ENCODE measurements at regions of chr11 and their contacts with region 1.

Region 1: DNA sequence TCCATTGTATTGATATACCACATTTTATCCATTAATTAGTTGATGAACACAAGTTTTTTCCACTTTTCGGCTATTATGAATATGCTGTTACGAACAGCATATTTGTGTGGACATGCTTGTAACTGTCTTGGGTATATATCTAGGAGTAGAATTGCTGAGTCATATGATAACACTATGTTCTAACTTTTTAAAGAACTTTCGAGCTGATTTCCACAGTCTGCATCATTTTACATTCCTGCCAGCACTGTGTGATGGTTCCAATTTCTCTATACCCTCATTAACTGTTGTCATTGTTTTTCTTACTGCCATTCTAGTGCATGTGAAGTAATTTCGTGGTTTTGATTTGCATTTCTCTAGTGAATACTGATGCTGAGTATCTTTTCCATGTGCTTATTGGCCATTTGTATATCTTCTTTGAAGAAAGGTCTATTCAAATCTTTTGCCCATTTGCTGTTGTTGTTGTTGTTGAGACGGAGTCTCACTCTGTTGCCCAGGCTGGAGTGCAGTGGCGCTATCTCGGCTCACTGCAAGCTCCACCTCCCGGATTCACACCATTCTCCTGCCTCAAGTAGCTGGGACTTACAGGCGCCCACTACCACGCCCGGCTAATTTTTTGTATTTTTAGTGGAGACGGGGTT is 7.4 kb upstream of the RCE1 start:
- DNase-seq: no peak
- H3K4me3 ChIP-seq: no peak overlapping the region
- H3K4me3 Mint-ChIP-seq: no peak overlapping the region
- H3K27ac ChIP-seq: peak overlapping the region; percentile 12
- H3K27ac Mint-ChIP-seq: peak overlapping the region in 3 of 8 donors; percentile 7 to 61 (median 44)
- H3K4me1 ChIP-seq: peaks cover 18% of the 10 kb centered on the region
- H3K4me1 Mint-ChIP-seq: peaks cover 19 to 35% (median 33%) of the 10 kb centered on the region in 3 donors
- H3K27me3 ChIP-seq: no peaks in the 10 kb centered on the region
- H3K27me3 Mint-ChIP-seq: no peaks in the 10 kb centered on the region

Region 2: GRCh38 chr11:66589996-66590675 is 245.8 kb before region 1 on chr11:
- CTCF ChIA-PET with region 1: no interaction called
- POLR2A ChIA-PET with region 1: no interaction called
- DNase-seq: no peak
- H3K4me3 ChIP-seq: no peak overlapping the region
- H3K4me3 Mint-ChIP-seq: peak overlapping the region in 1 of 7 donors; percentile 65
- H3K27ac ChIP-seq: no peak overlapping the region
- H3K27ac Mint-ChIP-seq: peak overlapping the region in 4 of 8 donors; percentile 11 to 78 (median 36)
- H3K4me1 ChIP-seq: peaks cover 22% of the 10 kb centered on the region
- H3K4me1 Mint-ChIP-seq: peaks cover 23 to 25% (median 24%) of the 10 kb centered on the region in 3 donors
- H3K27me3 ChIP-seq: no peaks in the 10 kb centered on the region
- H3K27me3 Mint-ChIP-seq: peaks cover 0 to 3% of the 10 kb centered on the region in 2 donors

Region 3: DNA sequence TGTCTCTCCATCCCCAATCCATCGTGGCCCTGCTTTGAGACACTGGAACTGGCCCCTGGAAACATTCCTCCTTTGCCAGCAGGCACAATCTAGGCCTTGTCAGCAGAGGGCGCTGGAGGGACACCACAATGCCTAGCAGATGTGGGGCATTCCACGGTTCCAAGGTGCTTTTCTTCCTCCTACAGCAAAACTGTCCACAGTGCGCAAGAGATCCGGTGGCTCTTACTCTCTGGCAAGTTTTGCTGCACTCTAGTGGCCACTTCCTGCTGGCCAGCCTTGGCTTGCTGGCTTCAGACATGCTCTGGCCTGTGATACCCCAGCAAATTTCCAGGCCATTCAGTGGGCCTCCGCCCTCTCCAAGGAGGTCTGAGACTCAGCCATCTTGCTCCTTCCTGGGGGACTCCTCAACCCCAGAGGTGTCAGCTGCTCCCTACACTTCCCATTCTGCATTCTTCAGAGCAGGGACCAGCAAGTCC is 141.1 kb before region 1 on chr11:
- CTCF ChIA-PET with region 1: interaction called, 22 read pairs
- POLR2A ChIA-PET with region 1: no interaction called
- DNase-seq: peak; percentile 69 to 86 (median 76)
- H3K4me3 ChIP-seq: no peak overlapping the region
- H3K4me3 Mint-ChIP-seq: no peak overlapping the region
- H3K27ac ChIP-seq: no peak overlapping the region
- H3K27ac Mint-ChIP-seq: no peak overlapping the region
- H3K4me1 ChIP-seq: no peaks in the 10 kb centered on the region
- H3K4me1 Mint-ChIP-seq: peaks cover 0 to 2% (median 0%) of the 10 kb centered on the region in 3 donors
- H3K27me3 ChIP-seq: no peaks in the 10 kb centered on the region
- H3K27me3 Mint-ChIP-seq: peaks cover 1 to 7% of the 10 kb centered on the region in 2 donors

Region 4: GRCh38 chr11:66875378-66875777 is 39.5 kb after region 1 on chr11:
- CTCF ChIA-PET with region 1: no interaction called
- POLR2A ChIA-PET with region 1: no interaction called
- DNase-seq: no peak
- H3K4me3 ChIP-seq: no peak overlapping the region
- H3K4me3 Mint-ChIP-seq: no peak overlapping the region
- H3K27ac ChIP-seq: no peak overlapping the region
- H3K27ac Mint-ChIP-seq: no peak overlapping the region
- H3K4me1 ChIP-seq: peaks cover 6% of the 10 kb centered on the region
- H3K4me1 Mint-ChIP-seq: peaks cover 2 to 8% (median 4%) of the 10 kb centered on the region in 3 donors
- H3K27me3 ChIP-seq: no peaks in the 10 kb centered on the region
- H3K27me3 Mint-ChIP-seq: peaks cover 0 to 4% of the 10 kb centered on the region in 2 donors

Region 5: DNA sequence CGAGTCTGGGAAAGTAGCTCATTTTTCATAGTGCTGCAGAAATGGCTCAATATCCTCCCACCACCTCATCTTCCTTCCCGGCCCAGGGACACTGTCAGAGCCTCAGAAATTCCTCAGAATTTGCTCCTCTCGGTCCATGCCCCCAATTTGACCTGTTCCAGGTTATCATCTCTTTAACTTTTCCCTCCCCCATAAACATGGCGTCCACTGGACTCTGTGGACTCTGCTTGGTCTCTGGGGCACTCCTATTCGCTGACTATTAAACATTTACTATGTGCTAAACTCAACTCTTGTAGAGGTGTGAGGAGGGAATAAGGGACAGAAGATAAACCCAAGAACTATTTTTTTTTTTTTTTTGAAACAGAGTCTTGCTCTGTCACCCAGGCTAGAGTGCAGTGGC is 130.5 kb after region 1 on chr11:
- CTCF ChIA-PET with region 1: no interaction called
- POLR2A ChIA-PET with region 1: interaction called, 14 read pairs
- DNase-seq: no peak
- H3K4me3 ChIP-seq: no peak overlapping the region
- H3K4me3 Mint-ChIP-seq: no peak overlapping the region
- H3K27ac ChIP-seq: no peak overlapping the region
- H3K27ac Mint-ChIP-seq: no peak overlapping the region
- H3K4me1 ChIP-seq: no peaks in the 10 kb centered on the region
- H3K4me1 Mint-ChIP-seq: no peaks in the 10 kb centered on the region
- H3K27me3 ChIP-seq: no peaks in the 10 kb centered on the region
- H3K27me3 Mint-ChIP-seq: peaks cover 7 to 31% of the 10 kb centered on the region in 2 donors